Transverse colon (tissue), 4 donors: ENCODE measurements at regions of chr7 and their contacts with region 1.

Region 1: GRCh38 chr7:74026903-74027551 is 946 bp upstream of the ELN start:
- DNase-seq: peak; percentile 79
- H3K4me3 ChIP-seq: peak overlapping the region in 1 of 4 donors; percentile 49
- H3K27ac ChIP-seq: peak overlapping the region; percentile 77 to 95 (median 82)
- H3K4me1 ChIP-seq: peaks cover 17 to 44% (median 25%) of the 10 kb centered on the region in 4 donors
- H3K27me3 ChIP-seq: peaks cover 6% of the 10 kb centered on the region
- CTCF ChIP-seq: peak; percentile 94 to 97 (median 96)
- EP300 ChIP-seq: no peak
- POLR2A ChIP-seq: no peak

Region 2: DNA sequence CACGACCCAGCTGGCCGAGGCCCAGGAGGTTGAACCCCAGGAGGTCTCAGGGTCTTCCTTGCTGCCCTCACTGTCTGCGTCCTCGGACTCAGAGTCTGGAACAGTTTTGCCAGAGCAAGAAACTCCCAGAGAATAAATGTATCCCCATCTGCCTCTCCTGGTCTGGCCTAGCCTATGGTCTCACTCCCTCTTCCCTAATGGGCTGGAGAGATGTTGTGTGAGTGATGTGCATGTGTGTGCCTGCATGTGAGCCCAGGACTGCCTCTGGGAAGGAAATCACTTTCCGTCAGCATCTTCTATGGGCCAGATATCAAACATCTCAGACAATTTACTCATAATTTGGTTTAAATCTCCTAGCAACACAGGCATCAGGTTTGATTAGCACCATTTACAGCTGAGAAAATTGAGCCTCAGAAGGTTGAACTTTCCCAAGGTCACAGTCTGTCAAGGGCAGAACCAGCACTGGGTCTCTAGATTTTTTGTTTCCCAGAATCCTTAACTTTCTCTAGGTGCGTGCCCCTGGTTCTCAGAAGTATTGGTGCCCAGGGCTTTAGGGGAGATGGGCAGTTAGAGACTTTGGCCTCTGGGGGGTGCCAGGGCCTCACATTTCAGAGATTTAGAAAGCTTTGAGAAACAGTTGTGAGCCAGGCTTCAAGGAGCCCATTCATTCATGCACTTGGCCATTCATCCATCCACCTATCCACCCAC is 161.1 kb before region 1 on chr7:
- in situ Hi-C with region 1: loop called in 3 of 4 experiments (anchors 10 kb)
- intact Hi-C with region 1: loop called (anchors 5 kb)
- DNase-seq: peak; percentile 37
- H3K4me3 ChIP-seq: no peak overlapping the region
- H3K27ac ChIP-seq: no peak overlapping the region
- H3K4me1 ChIP-seq: peaks cover 3 to 16% (median 7%) of the 10 kb centered on the region in 4 donors
- H3K27me3 ChIP-seq: no peaks in the 10 kb centered on the region
- CTCF ChIP-seq: peak; percentile 41 to 61 (median 58)
- EP300 ChIP-seq: no peak
- POLR2A ChIP-seq: no peak

Region 3: GRCh38 chr7:73879977-73880681 is 146.9 kb before region 1 on chr7:
- in situ Hi-C with region 1: loop called (anchors 10 to 25 kb)
- intact Hi-C with region 1: no loop called
- DNase-seq: no peak
- H3K4me3 ChIP-seq: no peak overlapping the region
- H3K27ac ChIP-seq: peak overlapping the region in 3 of 4 donors; percentile 3 to 53 (median 28)
- H3K4me1 ChIP-seq: peaks cover 5 to 11% (median 10%) of the 10 kb centered on the region in 4 donors
- H3K27me3 ChIP-seq: no peaks in the 10 kb centered on the region
- CTCF ChIP-seq: no peak
- EP300 ChIP-seq: no peak
- POLR2A ChIP-seq: no peak